ENCODE measurements at regions of chr6 and their contacts with region 1.

Region 1: DNA sequence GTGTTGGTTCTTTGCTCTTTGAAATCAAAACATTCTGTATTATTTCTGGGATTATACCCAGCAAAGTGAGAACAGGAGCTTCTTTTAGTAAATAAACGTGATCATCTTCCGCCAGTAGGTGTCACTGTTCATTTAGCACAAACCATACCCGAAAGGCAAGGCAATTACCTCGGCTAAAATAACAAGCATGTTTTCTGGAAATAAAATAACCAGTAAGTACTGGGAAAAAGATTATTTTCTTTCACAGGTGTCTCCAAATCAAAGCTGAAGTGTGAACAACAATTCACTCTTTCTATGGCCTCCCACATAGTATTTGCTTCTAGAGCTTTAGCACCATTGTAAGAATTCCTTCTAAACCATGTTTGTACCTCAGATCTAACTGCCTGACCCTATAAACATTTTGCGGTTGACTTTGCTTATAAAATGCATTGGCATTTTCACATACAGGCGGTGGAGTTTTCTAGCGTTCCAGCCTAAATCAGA is 144.6 kb upstream of the AGPAT4 start:
- DNase-seq: peak in 2 of 5 donors; percentile 39 to 66
- ATAC-seq: peak; percentile 34 to 69 (median 50)
- H3K4me3 ChIP-seq: no peak overlapping the region
- H3K27ac ChIP-seq: peak overlapping the region in 6 of 12 donors; percentile 7 to 57 (median 43)
- H3K4me1 ChIP-seq: peaks cover 0 to 24% (median 1%) of the 10 kb centered on the region in 12 donors
- H3K27me3 ChIP-seq: no peaks in the 10 kb centered on the region
- CTCF ChIP-seq: peak; percentile 58 to 85 (median 73)
- POLR2A ChIP-seq: no peak

Region 2: GRCh38 chr6:161498359-161498758 is 79.9 kb after region 1 on chr6:
- intact Hi-C with region 1: loop called in 9 of 10 experiments (anchors 1 to 5 kb)
- DNase-seq: peak in 3 of 5 donors; percentile 21 to 33 (median 23)
- ATAC-seq: peak; percentile 46 to 84 (median 70)
- H3K4me3 ChIP-seq: no peak overlapping the region
- H3K27ac ChIP-seq: no peak overlapping the region
- H3K4me1 ChIP-seq: peaks cover 0 to 8% (median 0%) of the 10 kb centered on the region in 12 donors
- H3K27me3 ChIP-seq: no peaks in the 10 kb centered on the region
- CTCF ChIP-seq: peak in 11 of 12 donors; percentile 10 to 46 (median 37)
- POLR2A ChIP-seq: no peak

Region 3: GRCh38 chr6:161694995-161695394 is 276.5 kb after region 1 on chr6:
- intact Hi-C with region 1: loop called (anchors 2 to 10 kb)
- DNase-seq: no peak
- ATAC-seq: peak in 1 of 4 donors; percentile 51
- H3K4me3 ChIP-seq: no peak overlapping the region
- H3K27ac ChIP-seq: no peak overlapping the region
- H3K4me1 ChIP-seq: no peaks in the 10 kb centered on the region
- H3K27me3 ChIP-seq: no peaks in the 10 kb centered on the region
- CTCF ChIP-seq: peak; percentile 21 to 63 (median 40)
- POLR2A ChIP-seq: no peak

Region 4: DNA sequence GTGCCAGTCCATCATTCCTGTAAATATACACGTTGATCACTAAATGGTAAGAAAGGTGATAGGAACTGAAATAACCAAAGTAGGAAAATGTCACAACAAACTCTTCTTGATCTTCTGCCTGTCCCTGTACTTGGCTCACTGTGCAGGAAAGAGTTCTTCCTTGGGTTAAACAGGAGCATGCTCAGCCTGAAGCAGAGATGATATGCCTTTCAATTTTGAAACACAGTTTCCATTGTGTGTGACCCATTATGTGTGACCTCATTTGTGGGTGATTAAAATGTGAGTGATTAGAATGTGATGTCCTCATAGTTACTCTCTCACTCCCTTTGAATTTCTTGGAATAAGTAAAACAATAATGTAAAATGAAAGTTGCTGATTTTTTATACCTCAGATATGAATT is 282.6 kb after region 1 on chr6:
- intact Hi-C with region 1: loop called in 8 of 10 experiments (anchors 2 to 10 kb)
- DNase-seq: no peak
- ATAC-seq: no peak
- H3K4me3 ChIP-seq: no peak overlapping the region
- H3K27ac ChIP-seq: no peak overlapping the region
- H3K4me1 ChIP-seq: no peaks in the 10 kb centered on the region
- H3K27me3 ChIP-seq: no peaks in the 10 kb centered on the region
- CTCF ChIP-seq: no peak
- POLR2A ChIP-seq: no peak

Region 5: GRCh38 chr6:161922631-161923119 is 504.2 kb after region 1 on chr6:
- intact Hi-C with region 1: loop called in 2 of 10 experiments (anchors 5 to 10 kb)
- DNase-seq: peak in 4 of 5 donors; percentile 15 to 70 (median 40)
- ATAC-seq: peak in 3 of 4 donors; percentile 86 to 95 (median 93)
- H3K4me3 ChIP-seq: no peak overlapping the region
- H3K27ac ChIP-seq: no peak overlapping the region
- H3K4me1 ChIP-seq: peaks cover 0 to 7% (median 0%) of the 10 kb centered on the region in 12 donors
- H3K27me3 ChIP-seq: no peaks in the 10 kb centered on the region
- CTCF ChIP-seq: peak; percentile 15 to 55 (median 39)
- POLR2A ChIP-seq: no peak